B cell (primary cell): ENCODE measurements at regions of chr10 and their contacts with region 1.

Region 1: GRCh38 chr10:74826142-74827044 is at the start of gene KAT6B:
- DNase-seq: peak; percentile 100
- ATAC-seq: peak; percentile 75
- H3K4me3 ChIP-seq: peak within 1 kb of the TSS; percentile 81 to 99 (median 90)
- H3K4me3 Mint-ChIP-seq: peak within 1 kb of the TSS; percentile 93
- H3K27ac ChIP-seq: peak within 1 kb of the TSS; percentile 91 to 99
- H3K27ac Mint-ChIP-seq: peak within 1 kb of the TSS; percentile 97
- H3K4me1 ChIP-seq: peaks cover 30 to 38% of the 10 kb centered on the region in 2 donors
- H3K4me1 Mint-ChIP-seq: peaks cover 42% of the 10 kb centered on the region
- H3K27me3 ChIP-seq: no peaks in the 10 kb centered on the region
- H3K27me3 Mint-ChIP-seq: no peaks in the 10 kb centered on the region
- CTCF ChIP-seq: peak; percentile 39
- total RNA-seq, gene KAT6B: 111 and 119 TPM in 2 replicates

Region 2: DNA sequence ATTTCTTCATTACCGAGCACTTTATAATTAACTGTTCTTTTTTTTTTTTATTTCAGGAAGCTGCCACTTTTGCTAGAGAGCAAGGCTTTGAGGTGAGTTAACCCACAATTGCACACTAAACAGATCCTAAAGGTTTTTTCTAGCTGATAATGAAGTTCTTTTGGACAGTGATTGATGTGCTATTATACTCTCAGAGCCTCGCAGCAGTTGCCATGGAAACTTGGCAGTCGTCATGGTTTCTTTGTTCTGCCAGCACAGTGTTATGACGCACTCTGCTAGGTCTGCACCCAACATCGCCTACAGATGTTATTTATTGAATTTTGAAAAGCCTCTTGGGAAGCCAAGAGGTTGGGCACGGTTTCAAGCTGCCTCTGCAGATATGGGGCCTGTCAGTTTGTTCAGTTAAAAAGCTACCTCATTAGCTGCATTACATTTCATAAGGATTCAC is 237.1 kb before region 1 on chr10:
- CTCF ChIA-PET with region 1: no interaction called
- POLR2A ChIA-PET with region 1: interaction called, 4 read pairs
- intact Hi-C with region 1: loop called (anchors 5 kb)
- DNase-seq: peak; percentile 77
- ATAC-seq: peak; percentile 73
- H3K4me3 ChIP-seq: no peak overlapping the region
- H3K4me3 Mint-ChIP-seq: peak overlapping the region; percentile 21
- H3K27ac ChIP-seq: peak overlapping the region in 1 of 2 donors; percentile 28
- H3K27ac Mint-ChIP-seq: peak overlapping the region; percentile 74
- H3K4me1 ChIP-seq: peaks cover 23 to 27% of the 10 kb centered on the region in 2 donors
- H3K4me1 Mint-ChIP-seq: peaks cover 49% of the 10 kb centered on the region
- H3K27me3 ChIP-seq: no peaks in the 10 kb centered on the region
- H3K27me3 Mint-ChIP-seq: no peaks in the 10 kb centered on the region
- CTCF ChIP-seq: no peak

Region 3: DNA sequence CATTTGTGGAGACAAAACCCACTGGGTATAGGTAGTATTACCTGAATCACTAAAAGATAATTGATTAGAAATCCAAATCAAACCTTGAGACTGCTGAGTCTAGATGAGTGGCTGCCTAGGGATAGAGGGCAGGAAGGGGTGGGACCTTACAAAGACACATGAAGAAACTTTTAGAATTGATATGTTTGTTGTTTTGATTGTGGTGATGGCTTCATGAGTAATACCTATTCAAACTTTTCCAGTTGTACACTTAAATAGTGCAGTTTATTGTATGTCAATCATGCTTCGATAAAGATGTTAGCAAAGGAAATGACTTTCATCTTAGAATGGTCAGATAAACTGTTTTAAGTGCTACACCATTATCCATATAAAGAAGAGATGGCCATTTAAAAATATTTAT is 188.7 kb before region 1 on chr10:
- CTCF ChIA-PET with region 1: no interaction called
- POLR2A ChIA-PET with region 1: interaction called, 10 read pairs
- intact Hi-C with region 1: no loop called
- DNase-seq: no peak
- ATAC-seq: no peak
- H3K4me3 ChIP-seq: no peak overlapping the region
- H3K4me3 Mint-ChIP-seq: no peak overlapping the region
- H3K27ac ChIP-seq: no peak overlapping the region
- H3K27ac Mint-ChIP-seq: no peak overlapping the region
- H3K4me1 ChIP-seq: no peaks in the 10 kb centered on the region
- H3K4me1 Mint-ChIP-seq: peaks cover 13% of the 10 kb centered on the region
- H3K27me3 ChIP-seq: no peaks in the 10 kb centered on the region
- H3K27me3 Mint-ChIP-seq: no peaks in the 10 kb centered on the region
- CTCF ChIP-seq: no peak

Region 4: DNA sequence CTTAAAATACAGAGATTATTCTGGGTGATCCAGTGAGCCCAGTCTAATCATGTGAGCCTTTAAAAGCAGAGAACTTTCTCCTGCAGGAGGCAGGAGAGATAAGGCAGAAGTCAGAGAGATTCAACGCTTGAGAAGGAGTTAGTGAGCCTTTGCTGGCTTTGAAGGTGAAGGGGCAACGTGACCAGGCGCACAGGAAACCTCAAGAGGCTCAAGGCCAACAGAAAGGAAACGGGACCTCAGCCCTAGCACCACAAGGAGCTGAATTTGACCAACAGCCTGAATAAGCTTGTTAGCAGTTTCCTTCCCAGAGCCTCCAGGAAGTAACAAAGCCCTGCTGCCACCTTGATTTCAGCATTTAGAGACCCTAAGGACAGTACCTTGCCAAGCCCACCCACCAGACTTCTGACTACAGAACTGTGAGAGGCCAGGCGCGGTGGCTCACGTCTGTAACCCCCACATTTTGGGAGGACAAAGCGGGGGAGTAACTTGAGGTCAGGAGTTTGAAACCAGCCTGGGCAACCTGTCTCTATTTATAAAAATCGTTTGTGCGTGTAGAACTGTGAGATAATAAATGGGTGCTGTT is 87.3 kb before region 1 on chr10:
- CTCF ChIA-PET with region 1: interaction called, 3 read pairs
- POLR2A ChIA-PET with region 1: interaction called, 3 read pairs
- intact Hi-C with region 1: loop called (anchors 10 kb)
- DNase-seq: peak; percentile 64
- ATAC-seq: peak; percentile 69
- H3K4me3 ChIP-seq: peak overlapping the region in 3 of 5 experiments; percentile 10 to 33 (median 25)
- H3K4me3 Mint-ChIP-seq: peak overlapping the region; percentile 66
- H3K27ac ChIP-seq: peak overlapping the region; percentile 15 to 37
- H3K27ac Mint-ChIP-seq: peak overlapping the region; percentile 75
- H3K4me1 ChIP-seq: peaks cover 21 to 23% of the 10 kb centered on the region in 2 donors
- H3K4me1 Mint-ChIP-seq: peaks cover 25% of the 10 kb centered on the region
- H3K27me3 ChIP-seq: no peaks in the 10 kb centered on the region
- H3K27me3 Mint-ChIP-seq: no peaks in the 10 kb centered on the region
- CTCF ChIP-seq: peak; percentile 54

Region 5: DNA sequence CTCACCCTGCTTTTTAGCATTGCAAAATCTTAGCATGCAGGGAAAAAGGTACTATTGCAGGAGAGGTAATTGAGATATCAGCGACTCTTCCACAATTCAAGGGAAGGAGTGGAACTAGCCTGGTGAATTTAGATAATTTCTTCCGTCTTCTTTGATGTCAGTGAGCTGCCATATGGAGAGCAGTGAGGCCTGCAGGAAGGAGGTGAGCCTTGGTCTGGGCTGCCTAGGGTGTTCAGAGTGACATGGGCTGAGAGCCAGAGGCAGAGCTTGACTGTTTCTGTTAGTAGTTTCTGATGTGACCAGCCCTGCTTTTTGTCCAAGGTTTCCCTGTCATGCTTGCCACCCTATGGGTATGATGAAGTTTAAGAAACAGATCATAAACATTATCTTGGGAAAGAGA is 28.6 kb after region 1 on chr10:
- CTCF ChIA-PET with region 1: interaction called, 4 read pairs
- POLR2A ChIA-PET with region 1: interaction called, 15 read pairs
- intact Hi-C with region 1: loop called (anchors 1 kb)
- DNase-seq: peak; percentile 38
- ATAC-seq: peak; percentile 16
- H3K4me3 ChIP-seq: peak overlapping the region in 1 of 5 experiments; percentile 21
- H3K4me3 Mint-ChIP-seq: peak overlapping the region; percentile 68
- H3K27ac ChIP-seq: peak overlapping the region; percentile 72 to 88
- H3K27ac Mint-ChIP-seq: peak overlapping the region; percentile 82
- H3K4me1 ChIP-seq: peaks cover 28 to 31% of the 10 kb centered on the region in 2 donors
- H3K4me1 Mint-ChIP-seq: peaks cover 45% of the 10 kb centered on the region
- H3K27me3 ChIP-seq: no peaks in the 10 kb centered on the region
- H3K27me3 Mint-ChIP-seq: no peaks in the 10 kb centered on the region
- CTCF ChIP-seq: no peak

Region 6: GRCh38 chr10:74977913-74978847 is 151.8 kb after region 1 on chr10:
- CTCF ChIA-PET with region 1: no interaction called
- POLR2A ChIA-PET with region 1: interaction called, 16 read pairs
- intact Hi-C with region 1: loop called (anchors 1 kb)
- DNase-seq: peak; percentile 84
- ATAC-seq: peak; percentile 85
- H3K4me3 ChIP-seq: peak overlapping the region in 3 of 5 experiments; percentile 8 to 40 (median 11)
- H3K4me3 Mint-ChIP-seq: peak overlapping the region; percentile 78
- H3K27ac ChIP-seq: peak overlapping the region; percentile 37 to 66
- H3K27ac Mint-ChIP-seq: peak overlapping the region; percentile 81
- H3K4me1 ChIP-seq: peaks cover 35 to 39% of the 10 kb centered on the region in 2 donors
- H3K4me1 Mint-ChIP-seq: peaks cover 51% of the 10 kb centered on the region
- H3K27me3 ChIP-seq: no peaks in the 10 kb centered on the region
- H3K27me3 Mint-ChIP-seq: no peaks in the 10 kb centered on the region
- CTCF ChIP-seq: no peak

Region 7: GRCh38 chr10:74991440-74992130 is 165.2 kb after region 1 on chr10:
- CTCF ChIA-PET with region 1: interaction called, 3 read pairs
- POLR2A ChIA-PET with region 1: no interaction called
- intact Hi-C with region 1: loop called (anchors 1 kb)
- DNase-seq: peak; percentile 48
- ATAC-seq: peak; percentile 31
- H3K4me3 ChIP-seq: no peak overlapping the region
- H3K4me3 Mint-ChIP-seq: no peak overlapping the region
- H3K27ac ChIP-seq: no peak overlapping the region
- H3K27ac Mint-ChIP-seq: no peak overlapping the region
- H3K4me1 ChIP-seq: peaks cover 0 to 4% of the 10 kb centered on the region in 2 donors
- H3K4me1 Mint-ChIP-seq: peaks cover 3% of the 10 kb centered on the region
- H3K27me3 ChIP-seq: no peaks in the 10 kb centered on the region
- H3K27me3 Mint-ChIP-seq: no peaks in the 10 kb centered on the region
- CTCF ChIP-seq: peak; percentile 54